Calu3 (cell line): ENCODE measurements at regions of chr20 and their contacts with region 1.

Region 1: GRCh38 chr20:41038878-41039404 is 10.3 kb downstream of the TOP1 start:
- DNase-seq: peak; percentile 39
- H3K4me3 Mint-ChIP-seq: peak overlapping the region; percentile 49
- H3K27ac Mint-ChIP-seq: peak overlapping the region; percentile 82
- H3K4me1 Mint-ChIP-seq: peaks cover 91% of the 10 kb centered on the region
- H3K27me3 Mint-ChIP-seq: no peaks in the 10 kb centered on the region
- CTCF ChIP-seq: no peak

Region 2: GRCh38 chr20:41003143-41003883 is 35.6 kb before region 1 on chr20:
- CTCF ChIA-PET with region 1: no interaction called
- intact Hi-C with region 1: loop called (anchors 1 kb)
- DNase-seq: peak; percentile 93
- H3K4me3 Mint-ChIP-seq: peak overlapping the region; percentile 54
- H3K27ac Mint-ChIP-seq: peak overlapping the region; percentile 99
- H3K4me1 Mint-ChIP-seq: peaks cover 47% of the 10 kb centered on the region
- H3K27me3 Mint-ChIP-seq: no peaks in the 10 kb centered on the region
- CTCF ChIP-seq: no peak

Region 3: DNA sequence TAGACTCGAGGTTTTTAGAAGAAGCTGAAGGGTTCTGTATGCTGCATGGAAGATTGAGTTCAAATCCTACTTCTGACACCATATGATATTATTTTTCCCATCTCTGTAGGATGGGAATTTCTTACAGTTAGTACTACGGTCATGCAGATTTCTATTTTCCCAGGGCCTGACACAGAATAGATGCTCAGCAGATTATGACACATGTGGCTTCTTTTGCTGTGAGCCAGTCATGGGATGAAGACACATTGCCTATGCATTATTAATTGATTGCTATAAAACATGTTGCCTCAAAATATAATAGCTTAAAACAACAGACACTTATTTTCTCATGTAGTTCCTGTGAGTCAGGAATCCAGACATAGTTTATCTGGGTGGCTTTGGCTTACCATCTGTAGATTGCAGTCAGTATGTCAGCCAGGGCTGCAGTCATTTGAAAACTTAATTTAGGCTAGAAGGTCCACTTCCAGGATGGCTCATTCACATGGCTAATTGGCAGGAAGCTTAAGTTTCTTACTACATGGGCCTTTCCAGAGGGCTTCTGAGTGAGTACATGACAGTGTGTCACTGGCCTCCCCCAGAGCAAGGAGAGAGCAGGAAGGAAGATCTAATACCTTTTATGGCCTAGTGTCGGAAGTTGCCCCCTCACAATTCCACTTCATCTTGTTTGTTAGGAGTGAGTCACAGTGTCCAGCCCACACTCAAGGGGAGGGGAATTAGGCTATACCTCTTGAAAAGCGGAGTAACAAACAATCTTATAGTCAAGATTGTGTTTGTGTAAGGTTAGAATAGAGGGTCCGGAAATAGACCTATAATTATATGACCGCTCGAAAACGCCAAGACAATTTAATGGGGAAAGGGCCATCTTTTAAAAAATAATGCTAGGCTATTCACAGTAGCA is 19.3 kb after region 1 on chr20:
- CTCF ChIA-PET with region 1: interaction called, 12 read pairs
- intact Hi-C with region 1: no loop called
- DNase-seq: no peak
- H3K4me3 Mint-ChIP-seq: no peak overlapping the region
- H3K27ac Mint-ChIP-seq: peak overlapping the region; percentile 40
- H3K4me1 Mint-ChIP-seq: peaks cover 43% of the 10 kb centered on the region
- H3K27me3 Mint-ChIP-seq: no peaks in the 10 kb centered on the region
- CTCF ChIP-seq: no peak

Region 4: DNA sequence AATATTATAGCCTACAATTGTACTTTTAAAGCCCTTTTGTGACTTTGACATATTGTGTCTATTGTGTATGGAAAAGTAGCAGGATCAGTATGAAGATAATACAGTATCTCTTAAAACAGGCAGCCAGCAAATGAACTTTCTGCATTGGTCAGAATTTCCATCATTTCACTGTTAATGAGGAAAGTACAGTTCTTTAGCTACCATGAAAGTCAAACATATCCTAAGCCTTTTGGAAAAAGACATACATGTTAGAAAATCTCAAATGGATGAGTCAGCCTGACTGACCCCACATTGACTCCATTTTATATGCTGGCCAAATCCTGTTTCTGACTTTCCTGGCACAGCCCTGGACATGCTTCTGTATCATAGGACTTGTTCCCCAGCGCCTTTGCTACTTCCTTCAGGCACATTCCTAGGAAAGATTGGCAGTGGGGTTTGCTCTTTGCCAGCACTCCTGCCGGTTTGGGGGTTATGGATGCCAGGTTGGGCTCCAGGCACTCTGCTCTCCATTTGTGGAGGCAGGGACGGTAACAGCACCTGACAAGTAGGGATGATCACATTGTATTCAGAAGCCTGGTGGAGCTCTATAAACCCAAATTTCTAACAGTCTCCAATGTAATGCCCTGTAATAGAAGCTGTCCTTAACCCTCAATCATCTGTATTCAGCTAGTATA is 33.4 kb after region 1 on chr20:
- CTCF ChIA-PET with region 1: interaction called, 5 read pairs
- intact Hi-C with region 1: loop called (anchors 2 kb)
- DNase-seq: peak; percentile 52
- H3K4me3 Mint-ChIP-seq: no peak overlapping the region
- H3K27ac Mint-ChIP-seq: peak overlapping the region; percentile 14
- H3K4me1 Mint-ChIP-seq: peaks cover 63% of the 10 kb centered on the region
- H3K27me3 Mint-ChIP-seq: no peaks in the 10 kb centered on the region
- CTCF ChIP-seq: no peak